PC-3 (cell line): ENCODE measurements at regions of chr12 and their contacts with region 1.

Region 1: DNA sequence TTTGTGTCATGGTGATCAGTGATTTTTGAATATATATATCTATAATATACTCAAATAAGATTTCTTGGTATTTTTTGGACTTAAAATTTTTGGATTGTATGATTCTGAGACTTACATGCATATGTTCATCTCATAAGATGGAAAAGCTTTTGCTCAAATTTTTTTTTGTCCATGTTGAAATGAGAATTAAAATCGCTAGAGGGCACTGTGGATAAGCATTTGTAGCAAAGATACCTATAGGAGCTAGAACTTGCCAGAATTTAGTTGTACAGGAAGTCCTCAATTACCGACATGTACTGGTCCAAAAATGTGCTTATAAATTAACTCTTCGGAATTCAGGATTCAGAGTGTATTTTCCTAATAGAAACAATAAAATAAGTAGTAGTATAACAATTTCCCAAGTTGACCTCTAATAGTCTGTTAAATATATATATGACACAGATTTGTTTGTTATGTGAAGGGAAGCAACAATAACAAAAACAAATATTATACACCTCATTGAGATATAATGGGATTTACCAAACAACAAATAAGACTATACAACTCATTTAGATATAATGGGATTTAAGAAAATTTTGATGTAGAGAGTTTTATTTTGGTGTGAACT is 179.6 kb downstream of the TMEM117 start:
- DNase-seq: peak; percentile 79
- ATAC-seq: peak; percentile 70
- H3K4me3 ChIP-seq: no peak overlapping the region
- H3K27ac ChIP-seq: no peak overlapping the region
- H3K4me1 ChIP-seq: no peaks in the 10 kb centered on the region
- H3K27me3 ChIP-seq: no peaks in the 10 kb centered on the region
- CTCF ChIP-seq: peak; percentile 73

Region 2: GRCh38 chr12:43976027-43976426 is 39.4 kb before region 1 on chr12:
- CTCF ChIA-PET with region 1: no interaction called
- POLR2A ChIA-PET with region 1: no interaction called
- intact Hi-C with region 1: no loop called
- DNase-seq: no peak
- ATAC-seq: peak; percentile 84
- H3K4me3 ChIP-seq: no peak overlapping the region
- H3K27ac ChIP-seq: no peak overlapping the region
- H3K4me1 ChIP-seq: no peaks in the 10 kb centered on the region
- H3K27me3 ChIP-seq: no peaks in the 10 kb centered on the region
- CTCF ChIP-seq: no peak

Region 3: DNA sequence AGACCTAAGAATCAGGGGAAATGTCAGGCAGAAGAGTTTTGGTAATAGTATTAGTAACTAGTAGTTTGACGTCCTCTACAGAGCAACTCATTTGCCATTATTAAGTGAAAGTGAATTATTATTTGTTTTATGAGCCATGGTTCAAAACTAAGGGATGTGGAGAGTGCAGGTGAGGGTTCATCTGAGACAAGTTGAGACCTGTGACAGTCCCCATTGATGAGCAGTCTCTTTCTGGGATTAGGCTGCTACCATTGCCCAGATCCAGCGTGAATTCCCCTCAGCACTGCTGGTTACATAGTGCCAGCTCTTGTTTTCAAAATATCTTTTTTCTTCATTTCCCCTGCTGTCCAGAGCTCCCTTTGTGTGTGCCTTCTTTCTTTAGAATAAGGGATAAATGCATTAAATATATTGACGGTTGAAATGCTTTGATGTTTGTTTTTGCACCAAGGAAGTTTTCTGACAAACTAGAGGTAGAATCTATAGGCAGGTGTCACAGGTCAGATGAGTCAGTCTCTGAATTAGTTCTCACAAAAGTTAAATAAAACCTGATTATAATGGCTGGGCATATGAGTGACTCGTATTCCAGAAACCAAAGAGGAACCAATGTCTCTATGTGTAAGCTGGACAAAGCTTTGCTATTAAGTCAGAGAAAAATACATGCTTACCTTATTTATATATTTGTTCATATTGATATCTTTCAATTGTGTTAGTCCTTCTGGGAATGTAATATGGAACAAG is 201.9 kb after region 1 on chr12:
- CTCF ChIA-PET with region 1: no interaction called
- POLR2A ChIA-PET with region 1: no interaction called
- intact Hi-C with region 1: no loop called
- DNase-seq: peak; percentile 31
- ATAC-seq: peak; percentile 60
- H3K4me3 ChIP-seq: no peak overlapping the region
- H3K27ac ChIP-seq: no peak overlapping the region
- H3K4me1 ChIP-seq: 0 out of 2 replicates have a peak, but pooled peaks cover 8% of the 10 kb centered on the region
- H3K27me3 ChIP-seq: no peaks in the 10 kb centered on the region
- CTCF ChIP-seq: no peak

Region 4: GRCh38 chr12:44317651-44318126 is 302.3 kb after region 1 on chr12:
- CTCF ChIA-PET with region 1: no interaction called
- POLR2A ChIA-PET with region 1: no interaction called
- intact Hi-C with region 1: loop called (anchors 2 kb)
- DNase-seq: peak; percentile 57
- ATAC-seq: peak; percentile 42; the same call in 1 of the 2 replicates
- H3K4me3 ChIP-seq: no peak overlapping the region
- H3K27ac ChIP-seq: no peak overlapping the region
- H3K4me1 ChIP-seq: peaks cover 5% of the 10 kb centered on the region; the same call in 1 of the 2 replicates
- H3K27me3 ChIP-seq: no peaks in the 10 kb centered on the region
- CTCF ChIP-seq: peak; percentile 64

Region 5: DNA sequence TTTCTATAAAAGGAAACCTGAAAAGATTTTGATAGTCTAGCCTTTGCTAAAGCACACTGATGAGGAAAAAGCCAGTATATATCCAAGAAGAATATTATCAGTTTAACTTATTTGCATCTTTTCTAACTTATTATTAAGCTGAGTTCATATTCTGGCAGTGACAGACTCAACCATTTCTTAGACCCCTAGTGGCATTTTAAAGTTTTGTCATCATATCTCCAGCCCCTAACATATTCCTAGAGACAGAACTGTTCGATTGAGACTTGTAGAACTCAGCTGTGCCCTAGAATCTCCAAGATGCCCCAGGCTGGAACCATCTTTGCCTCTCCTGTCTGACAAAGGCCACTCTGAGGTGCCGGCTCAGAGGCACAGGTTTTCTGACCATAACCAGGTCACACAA is 495.1 kb after region 1 on chr12:
- CTCF ChIA-PET with region 1: no interaction called
- POLR2A ChIA-PET with region 1: no interaction called
- intact Hi-C with region 1: loop called (anchors 1 kb)
- DNase-seq: peak; percentile 14
- ATAC-seq: no peak
- H3K4me3 ChIP-seq: no peak overlapping the region
- H3K27ac ChIP-seq: no peak overlapping the region
- H3K4me1 ChIP-seq: no peaks in the 10 kb centered on the region
- H3K27me3 ChIP-seq: 0 out of 2 replicates have a peak, but pooled peaks cover 12% of the 10 kb centered on the region
- CTCF ChIP-seq: peak; percentile 36; the same call in 1 of the 2 replicates

Region 6: DNA sequence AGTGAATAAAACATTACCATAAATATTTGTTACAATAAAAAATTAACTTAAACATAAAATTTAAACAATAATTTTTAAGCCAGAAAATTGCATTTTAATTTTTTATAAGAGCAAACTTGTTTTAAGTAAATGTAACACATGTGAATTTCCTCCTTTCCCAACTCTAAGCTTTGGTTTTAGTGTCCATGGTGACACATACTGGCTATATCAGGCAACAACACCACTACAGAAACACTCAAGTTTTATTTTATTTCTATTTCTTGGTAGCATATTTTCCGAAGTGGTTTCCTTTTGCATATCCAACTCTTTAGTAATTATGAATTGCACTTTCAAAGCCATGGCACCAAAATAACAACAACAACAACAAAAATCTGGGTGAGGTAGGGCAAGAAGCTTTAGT is 858.5 kb after region 1 on chr12:
- CTCF ChIA-PET with region 1: interaction called, 4 read pairs
- POLR2A ChIA-PET with region 1: no interaction called
- intact Hi-C with region 1: loop called (anchors 1 kb)
- DNase-seq: peak; percentile 39
- ATAC-seq: no peak
- H3K4me3 ChIP-seq: no peak overlapping the region
- H3K27ac ChIP-seq: no peak overlapping the region
- H3K4me1 ChIP-seq: peaks cover 15% of the 10 kb centered on the region
- H3K27me3 ChIP-seq: peaks cover 68% of the 10 kb centered on the region
- CTCF ChIP-seq: peak; percentile 39; the same call in 1 of the 2 replicates